Activated B cell treated with CpG ODN at 0.5 μM for 24 hours (primary cell): ENCODE measurements at regions of chr2 and their contacts with region 1.

Region 1: DNA sequence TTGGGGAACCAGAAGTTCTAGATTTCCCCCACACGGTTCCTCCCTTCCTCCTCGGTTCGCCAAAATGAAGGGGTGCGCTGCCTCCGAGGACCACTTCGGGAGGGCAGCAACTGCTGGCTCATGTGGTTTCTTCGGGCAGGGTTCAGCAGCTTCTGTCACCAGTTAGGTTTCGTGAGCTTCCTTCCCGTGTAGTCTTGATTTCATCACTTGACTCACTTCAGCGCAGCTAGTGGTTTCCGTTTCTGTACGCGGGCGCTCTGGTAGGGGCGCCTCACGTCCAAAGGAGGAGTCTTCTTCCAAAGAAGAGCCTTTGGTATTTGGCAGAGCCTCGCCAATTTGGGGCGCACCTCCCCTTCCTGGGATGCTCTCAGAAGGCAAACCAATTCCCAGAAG is 485 bp upstream of the GALNT3 start:
- DNase-seq: no peak
- ATAC-seq: peak; percentile 87
- H3K4me3 Mint-ChIP-seq: peak overlapping the region; percentile 97
- H3K27ac Mint-ChIP-seq: peak overlapping the region; percentile 96
- H3K4me1 Mint-ChIP-seq: peaks cover 36% of the 10 kb centered on the region
- H3K27me3 Mint-ChIP-seq: no peaks in the 10 kb centered on the region
- CTCF ChIP-seq: no peak

Region 2: DNA sequence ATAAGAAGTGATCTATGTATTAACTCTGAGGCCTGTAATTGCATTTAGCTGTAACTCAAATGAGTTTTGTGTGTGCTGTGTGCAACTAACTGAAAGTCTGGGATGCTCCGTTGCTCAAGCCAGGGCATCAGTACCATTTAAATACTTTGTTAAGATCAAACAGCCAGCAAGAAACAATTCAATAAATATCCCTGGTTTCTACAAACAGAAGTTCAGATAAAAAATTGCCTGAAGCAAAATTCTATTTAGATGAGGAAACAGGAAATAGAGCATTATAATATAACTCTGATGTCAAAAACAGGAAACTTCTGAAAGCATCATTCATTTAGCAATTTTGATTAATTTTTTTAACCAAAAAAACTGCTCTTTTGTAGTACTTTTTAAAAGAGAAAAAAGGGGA is 820.3 kb before region 1 on chr2:
- CTCF ChIA-PET with region 1: no interaction called
- POLR2A ChIA-PET with region 1: no interaction called
- intact Hi-C with region 1: loop called (anchors 10 kb)
- DNase-seq: no peak
- ATAC-seq: no peak
- H3K4me3 Mint-ChIP-seq: peak overlapping the region; percentile 32
- H3K27ac Mint-ChIP-seq: peak overlapping the region; percentile 57
- H3K4me1 Mint-ChIP-seq: peaks cover 85% of the 10 kb centered on the region
- H3K27me3 Mint-ChIP-seq: no peaks in the 10 kb centered on the region
- CTCF ChIP-seq: no peak

Region 3: GRCh38 chr2:165594935-165595255 is 199.6 kb before region 1 on chr2:
- CTCF ChIA-PET with region 1: no interaction called
- POLR2A ChIA-PET with region 1: no interaction called
- intact Hi-C with region 1: loop called (anchors 5 kb)
- DNase-seq: no peak
- ATAC-seq: peak; percentile 88
- H3K4me3 Mint-ChIP-seq: peak overlapping the region; percentile 59
- H3K27ac Mint-ChIP-seq: peak overlapping the region; percentile 42
- H3K4me1 Mint-ChIP-seq: peaks cover 18% of the 10 kb centered on the region
- H3K27me3 Mint-ChIP-seq: no peaks in the 10 kb centered on the region
- CTCF ChIP-seq: no peak

Region 4: GRCh38 chr2:165743442-165743841 is 51.1 kb before region 1 on chr2:
- CTCF ChIA-PET with region 1: no interaction called
- POLR2A ChIA-PET with region 1: no interaction called
- intact Hi-C with region 1: loop called (anchors 2 kb)
- DNase-seq: no peak
- ATAC-seq: peak; percentile 93
- H3K4me3 Mint-ChIP-seq: no peak overlapping the region
- H3K27ac Mint-ChIP-seq: peak overlapping the region; percentile 9
- H3K4me1 Mint-ChIP-seq: peaks cover 15% of the 10 kb centered on the region
- H3K27me3 Mint-ChIP-seq: no peaks in the 10 kb centered on the region
- CTCF ChIP-seq: no peak

Region 5: DNA sequence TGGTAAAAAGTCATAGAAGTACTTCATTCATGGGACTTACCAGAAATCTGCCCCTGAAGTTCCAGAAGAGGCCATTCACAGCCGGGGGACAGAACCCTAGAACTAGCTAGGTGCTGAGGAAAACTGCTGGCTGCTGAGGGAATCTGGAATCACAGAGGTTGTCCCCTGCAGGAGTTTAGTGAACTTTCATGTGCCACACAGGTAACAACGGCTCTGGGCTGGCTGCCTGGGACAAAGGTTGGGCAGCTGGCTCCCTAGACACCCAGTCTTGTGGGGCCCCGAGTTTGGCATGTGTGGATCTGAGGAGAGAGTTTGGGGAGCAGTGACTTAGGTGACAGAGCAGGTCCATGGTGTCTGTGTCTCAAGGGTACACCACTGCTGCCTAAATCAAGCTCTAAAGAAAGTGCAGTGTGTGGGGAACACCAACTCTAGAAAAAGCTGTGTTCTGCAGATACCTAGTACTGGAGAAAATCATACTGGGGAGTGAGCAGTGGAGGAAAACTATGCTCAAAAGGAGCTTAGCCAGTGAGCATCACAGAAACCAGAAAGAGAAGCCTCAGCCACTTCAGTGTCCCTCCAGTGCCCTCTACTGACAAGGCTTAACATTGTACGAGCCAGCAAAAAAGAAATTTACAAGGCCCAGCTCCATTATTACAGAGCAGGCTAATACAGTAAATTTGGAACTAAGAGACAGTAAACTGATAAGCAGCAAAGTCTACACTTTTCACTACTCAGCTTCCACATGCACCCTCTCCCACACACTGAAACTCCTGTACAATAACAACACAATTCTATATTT is 15.7 kb before region 1 on chr2:
- CTCF ChIA-PET with region 1: interaction called, 3 read pairs
- POLR2A ChIA-PET with region 1: interaction called, 7 read pairs
- intact Hi-C with region 1: loop called (anchors 2 kb)
- DNase-seq: no peak
- ATAC-seq: no peak
- H3K4me3 Mint-ChIP-seq: no peak overlapping the region
- H3K27ac Mint-ChIP-seq: no peak overlapping the region
- H3K4me1 Mint-ChIP-seq: peaks cover 18% of the 10 kb centered on the region
- H3K27me3 Mint-ChIP-seq: no peaks in the 10 kb centered on the region
- CTCF ChIP-seq: no peak

Region 6: DNA sequence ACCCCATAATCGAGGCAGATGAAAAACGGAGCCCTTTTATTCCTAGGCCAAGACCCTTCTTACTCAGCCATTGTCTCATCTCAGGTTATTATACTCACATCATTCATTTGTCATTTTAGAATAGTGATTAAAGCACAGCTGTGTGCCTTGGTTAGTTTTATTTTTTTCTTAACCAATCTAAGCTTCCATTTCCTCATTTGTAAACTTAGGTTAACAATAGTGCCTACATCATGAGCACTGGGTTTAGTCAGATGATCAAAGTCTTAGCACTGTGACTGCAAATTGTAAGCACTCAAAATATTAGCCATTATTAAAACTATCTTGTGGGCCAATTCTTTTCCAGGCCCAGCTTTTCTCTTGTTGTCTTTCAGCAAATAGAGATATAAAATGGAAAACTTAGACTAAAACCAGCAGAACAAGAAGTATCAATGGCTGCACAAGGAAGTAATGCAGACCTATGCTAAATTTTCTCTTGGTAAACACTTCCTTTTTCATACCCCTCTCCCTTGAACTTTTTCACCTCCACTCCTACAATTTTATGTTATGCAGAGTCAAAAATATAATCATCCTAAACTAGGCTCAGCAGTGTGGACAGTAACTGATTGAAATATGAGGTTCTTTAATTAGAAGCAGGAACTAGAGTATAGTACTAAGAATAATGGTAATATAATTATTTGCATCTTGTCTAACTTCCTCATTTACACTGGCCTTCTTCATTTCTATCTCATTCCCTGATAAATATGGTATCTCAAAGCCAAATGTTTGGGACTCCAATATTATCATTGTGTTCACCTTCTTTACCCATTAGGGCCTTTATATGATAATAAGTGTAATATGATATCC is 21.0 kb after region 1 on chr2:
- CTCF ChIA-PET with region 1: interaction called, 3 read pairs
- POLR2A ChIA-PET with region 1: interaction called, 23 read pairs
- intact Hi-C with region 1: loop called (anchors 1 kb)
- DNase-seq: no peak
- ATAC-seq: peak; percentile 74
- H3K4me3 Mint-ChIP-seq: peak overlapping the region; percentile 56
- H3K27ac Mint-ChIP-seq: peak overlapping the region; percentile 84
- H3K4me1 Mint-ChIP-seq: peaks cover 58% of the 10 kb centered on the region
- H3K27me3 Mint-ChIP-seq: no peaks in the 10 kb centered on the region
- CTCF ChIP-seq: no peak